Activated CD4-positive, alpha-beta memory T cell treated with anti-CD3 and anti-CD28 coated beads, Interleukin-2, amount 10 ng/mL, durations not matched to agents 7 days and 5 days (primary cell): ENCODE measurements at regions of chr9 and their contacts with region 1.

Region 1: GRCh38 chr9:131733541-131734061 is 6.3 kb downstream of the RAPGEF1 start:
- DNase-seq: peak; percentile 59
- H3K4me3 Mint-ChIP-seq: peak overlapping the region; percentile 71
- H3K27ac Mint-ChIP-seq: peak overlapping the region; percentile 99
- H3K4me1 Mint-ChIP-seq: peaks cover 85% of the 10 kb centered on the region
- H3K27me3 Mint-ChIP-seq: no peaks in the 10 kb centered on the region

Region 2: GRCh38 chr9:131627648-131628458 is 105.7 kb before region 1 on chr9:
- CTCF ChIA-PET with region 1: interaction called, 3 read pairs
- POLR2A ChIA-PET with region 1: interaction called, 23 read pairs
- DNase-seq: peak; percentile 71
- H3K4me3 Mint-ChIP-seq: peak overlapping the region; percentile 14
- H3K27ac Mint-ChIP-seq: peak overlapping the region; percentile 88
- H3K4me1 Mint-ChIP-seq: peaks cover 67% of the 10 kb centered on the region
- H3K27me3 Mint-ChIP-seq: no peaks in the 10 kb centered on the region

Region 3: GRCh38 chr9:131656356-131657036 is 77.1 kb before region 1 on chr9:
- CTCF ChIA-PET with region 1: interaction called, 5 read pairs
- POLR2A ChIA-PET with region 1: interaction called, 16 read pairs
- DNase-seq: peak; percentile 81
- H3K4me3 Mint-ChIP-seq: peak overlapping the region; percentile 25
- H3K27ac Mint-ChIP-seq: peak overlapping the region; percentile 90
- H3K4me1 Mint-ChIP-seq: peaks cover 86% of the 10 kb centered on the region
- H3K27me3 Mint-ChIP-seq: no peaks in the 10 kb centered on the region

Region 4: DNA sequence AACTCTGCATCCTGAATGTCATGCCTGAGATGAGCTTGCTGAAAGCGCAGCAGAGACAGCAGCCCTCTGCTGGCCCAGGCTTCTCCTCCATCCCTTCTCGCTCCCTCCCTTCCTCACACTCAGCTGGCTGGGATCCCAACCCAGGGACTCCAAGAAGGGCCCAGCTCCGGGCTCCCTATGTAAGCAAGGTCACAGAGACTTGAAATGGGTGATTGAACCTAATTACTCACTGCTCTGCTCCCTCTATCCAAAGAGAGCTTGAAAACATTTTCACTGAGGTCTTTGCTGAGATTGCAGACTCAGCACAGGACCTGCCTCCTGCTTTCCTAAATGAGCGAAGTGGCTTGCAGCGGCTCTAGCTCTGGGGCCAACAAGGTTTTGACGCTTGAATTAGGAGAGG is 36.5 kb before region 1 on chr9:
- CTCF ChIA-PET with region 1: interaction called, 7 read pairs
- POLR2A ChIA-PET with region 1: interaction called, 20 read pairs
- DNase-seq: no peak
- H3K4me3 Mint-ChIP-seq: no peak overlapping the region
- H3K27ac Mint-ChIP-seq: no peak overlapping the region
- H3K4me1 Mint-ChIP-seq: peaks cover 69% of the 10 kb centered on the region
- H3K27me3 Mint-ChIP-seq: no peaks in the 10 kb centered on the region

Region 5: DNA sequence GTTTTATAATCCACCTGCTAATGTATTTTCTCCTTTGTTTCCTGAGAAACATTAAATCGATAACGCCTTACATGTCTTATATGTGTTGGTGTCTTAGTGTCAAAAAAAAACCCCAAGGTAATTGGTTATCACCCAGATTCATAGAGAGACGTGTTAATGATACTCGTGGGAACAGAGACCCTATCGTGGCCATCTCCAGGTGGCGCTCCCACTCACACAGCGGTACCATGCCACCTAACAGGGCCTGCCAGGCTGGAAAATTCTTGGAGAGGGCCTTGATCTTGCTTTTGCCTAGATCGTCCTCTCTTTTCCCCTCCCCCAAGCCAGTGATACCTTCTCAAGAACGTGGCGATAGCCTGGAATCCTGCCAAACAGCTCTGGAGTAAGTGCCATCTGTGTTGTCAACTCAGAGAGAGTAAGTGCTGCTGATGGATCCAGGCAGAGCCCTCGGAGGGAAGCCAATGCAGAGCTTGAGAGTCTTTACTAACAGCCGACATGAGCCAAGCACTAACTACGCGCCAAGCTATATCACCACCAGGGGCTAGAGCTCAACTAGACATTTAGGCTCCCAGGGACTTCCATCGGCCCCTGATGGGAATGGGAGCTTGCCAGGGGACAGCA is 11.5 kb before region 1 on chr9:
- CTCF ChIA-PET with region 1: interaction called, 19 read pairs
- POLR2A ChIA-PET with region 1: interaction called, 64 read pairs
- DNase-seq: no peak
- H3K4me3 Mint-ChIP-seq: no peak overlapping the region
- H3K27ac Mint-ChIP-seq: no peak overlapping the region
- H3K4me1 Mint-ChIP-seq: peaks cover 82% of the 10 kb centered on the region
- H3K27me3 Mint-ChIP-seq: no peaks in the 10 kb centered on the region

Region 6: DNA sequence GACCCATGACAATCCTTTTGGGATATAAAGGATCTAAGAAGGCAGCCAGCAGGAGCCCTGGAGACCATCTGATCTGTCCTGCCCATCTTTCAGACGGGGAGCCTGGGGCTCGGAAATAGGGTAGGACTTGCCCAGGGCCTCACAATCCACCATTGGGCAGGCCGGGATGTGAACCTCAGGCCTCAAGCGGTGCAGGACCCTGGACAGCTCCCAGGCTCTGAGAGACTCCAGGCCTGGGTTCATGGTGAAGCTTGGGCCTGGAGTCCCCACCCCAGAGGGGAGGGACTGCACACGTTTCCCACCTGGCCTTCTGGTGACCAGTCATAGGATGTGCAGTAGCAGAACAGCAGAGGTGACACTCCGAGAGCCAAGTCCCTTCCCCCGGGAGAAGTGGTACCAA is 42.9 kb after region 1 on chr9:
- CTCF ChIA-PET with region 1: no interaction called
- POLR2A ChIA-PET with region 1: no interaction called
- DNase-seq: peak; percentile 48
- H3K4me3 Mint-ChIP-seq: no peak overlapping the region
- H3K27ac Mint-ChIP-seq: no peak overlapping the region
- H3K4me1 Mint-ChIP-seq: peaks cover 8% of the 10 kb centered on the region
- H3K27me3 Mint-ChIP-seq: peaks cover 13% of the 10 kb centered on the region